ENCODE measurements at regions of chr19 and their contacts with region 1.

Region 1: DNA sequence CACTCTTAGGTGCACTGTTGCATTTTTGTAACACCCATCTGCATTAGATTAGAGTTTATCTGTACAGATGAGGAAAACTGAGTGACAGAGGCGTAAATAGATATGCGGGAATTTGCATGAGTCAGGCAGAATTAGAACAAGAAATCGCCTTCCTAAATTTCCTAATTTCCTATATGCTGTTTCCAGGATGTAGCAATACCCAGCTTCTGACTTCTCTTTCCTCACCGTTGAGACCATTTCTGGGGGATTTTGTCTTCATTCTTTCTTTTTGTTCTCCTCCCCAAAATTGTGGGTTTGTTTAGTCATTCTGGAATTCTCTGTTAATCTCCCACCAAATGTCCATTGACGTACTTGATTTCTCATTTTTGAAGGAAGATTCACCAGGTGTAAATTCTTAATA is 10.6 kb upstream of the ZNF792 start:
- DNase-seq: no peak
- H3K4me3 ChIP-seq: no peak overlapping the region
- H3K27ac ChIP-seq: no peak overlapping the region
- H3K4me1 ChIP-seq: peaks cover 0 to 13% of the 10 kb centered on the region in 2 donors
- H3K27me3 ChIP-seq: no peaks in the 10 kb centered on the region
- CTCF ChIP-seq: no peak
- POLR2A ChIP-seq: no peak

Region 2: DNA sequence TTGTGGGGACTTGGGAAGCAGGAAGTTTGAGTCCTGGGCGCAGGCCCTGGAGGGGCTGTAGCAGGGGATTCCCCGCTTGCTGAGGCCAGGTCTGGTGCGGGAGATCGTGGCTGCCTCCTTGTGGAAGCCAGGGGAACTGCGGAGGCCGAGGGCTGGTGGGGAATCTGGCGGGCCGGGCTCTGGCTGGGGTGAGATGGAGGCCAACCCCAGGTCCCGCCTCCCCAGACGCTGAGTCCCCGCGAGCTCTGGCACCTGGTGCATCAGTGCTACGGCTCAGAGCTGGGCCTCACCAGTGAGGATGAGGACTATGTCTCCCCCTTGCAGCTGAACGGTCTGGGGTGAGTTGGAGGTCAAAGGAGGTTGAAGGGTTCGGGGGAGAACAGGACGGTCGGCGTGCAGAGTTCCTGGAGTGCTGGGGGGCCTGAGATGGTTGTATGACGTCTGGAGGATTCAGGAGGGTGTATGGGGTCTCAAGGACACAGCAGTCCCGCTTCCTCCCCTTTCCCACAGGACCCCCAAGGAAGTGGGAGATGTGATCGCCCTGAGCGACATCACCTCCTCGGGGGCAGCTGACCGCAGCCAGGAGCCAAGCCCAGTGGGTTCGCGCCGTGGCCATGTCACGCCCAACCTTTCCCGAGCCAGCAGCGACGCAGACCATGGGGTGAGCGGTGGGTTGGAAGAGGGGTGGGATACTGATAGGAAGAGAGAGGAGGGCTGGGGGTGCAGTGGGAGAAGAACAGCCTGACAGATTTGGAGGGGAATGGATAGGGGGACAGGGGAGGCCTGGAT is 38.6 kb after region 1 on chr19:
- intact Hi-C with region 1: loop called (anchors 2 to 5 kb)
- DNase-seq: peak; percentile 67 to 88 (median 75)
- H3K4me3 ChIP-seq: no peak overlapping the region
- H3K27ac ChIP-seq: peak overlapping the region in 2 of 5 donors; percentile 42 to 55
- H3K4me1 ChIP-seq: peaks cover 13 to 27% of the 10 kb centered on the region in 2 donors
- H3K27me3 ChIP-seq: no peaks in the 10 kb centered on the region
- CTCF ChIP-seq: peak; percentile 91 to 99 (median 98)
- POLR2A ChIP-seq: no peak

Region 3: DNA sequence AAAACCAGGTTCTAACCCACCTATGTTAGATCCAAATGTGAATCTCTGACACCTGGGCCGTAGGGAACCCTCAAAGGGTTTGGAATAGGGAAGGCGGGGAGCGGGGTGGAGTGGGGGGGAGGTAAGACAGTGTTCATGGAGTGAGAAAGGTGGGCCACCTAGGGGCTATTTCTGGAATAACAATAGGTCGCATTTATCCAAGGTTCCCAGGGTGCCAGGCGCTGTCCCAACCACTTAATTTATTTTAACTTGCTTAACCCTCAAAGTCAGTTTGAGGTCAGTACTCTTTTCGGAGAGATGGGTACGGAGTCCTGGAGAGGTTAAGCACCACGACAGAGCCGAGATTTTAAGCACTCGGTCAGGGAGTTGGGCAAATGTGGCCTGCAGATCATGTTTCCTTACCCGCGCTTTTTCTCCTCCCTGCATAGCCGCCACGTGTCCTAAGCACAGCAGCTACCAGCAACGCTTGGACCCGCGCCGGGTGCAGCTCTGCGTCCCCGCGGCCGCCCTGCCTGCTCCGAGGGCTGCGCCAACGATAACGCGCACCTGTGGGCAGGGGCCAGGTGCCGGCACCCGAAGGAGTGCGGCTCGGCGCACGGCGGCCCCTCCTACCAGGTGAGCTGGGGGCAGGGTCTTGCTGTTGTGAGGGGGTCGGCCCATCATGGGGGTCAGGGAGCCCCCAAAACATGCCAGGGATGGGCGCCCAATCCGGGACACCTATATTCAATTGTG is 116.0 kb after region 1 on chr19:
- intact Hi-C with region 1: loop called in 1 of 2 experiments (anchors 5 kb)
- DNase-seq: peak; percentile 47 to 80 (median 59)
- H3K4me3 ChIP-seq: no peak overlapping the region
- H3K27ac ChIP-seq: no peak overlapping the region
- H3K4me1 ChIP-seq: peaks cover 0 to 6% of the 10 kb centered on the region in 2 donors
- H3K27me3 ChIP-seq: peaks cover 11% of the 10 kb centered on the region
- CTCF ChIP-seq: peak; percentile 41 to 69 (median 50)
- POLR2A ChIP-seq: no peak